ENCODE measurements at regions of chr10 and their contacts with region 1.

Region 1: DNA sequence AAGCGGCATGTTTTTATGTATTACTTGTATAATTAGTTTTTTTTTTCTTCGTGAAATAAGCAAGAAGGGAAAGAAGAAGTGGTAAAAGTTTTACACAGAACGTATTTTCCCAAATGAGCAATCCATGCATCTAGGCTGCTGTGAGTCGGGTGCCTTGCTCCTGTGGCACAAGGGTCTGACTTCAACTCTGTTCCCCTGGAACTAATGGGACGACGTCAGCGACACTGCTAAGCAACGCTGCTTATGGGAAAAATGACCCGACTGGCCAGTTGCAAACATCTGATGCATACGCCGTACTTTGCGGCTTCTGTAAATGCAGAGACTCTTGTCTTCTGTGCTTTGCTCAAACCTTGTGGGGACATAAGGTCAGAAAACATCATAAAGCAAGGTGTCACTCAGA is 66.3 kb downstream of the MPP7 start:
- DNase-seq: no peak
- H3K4me3 ChIP-seq: no peak overlapping the region
- H3K27ac ChIP-seq: no peak overlapping the region
- H3K4me1 ChIP-seq: peaks cover 0 to under 1% (median 0%) of the 10 kb centered on the region in 4 donors
- H3K27me3 ChIP-seq: no peaks in the 10 kb centered on the region
- CTCF ChIP-seq: no peak
- EP300 ChIP-seq: no peak
- POLR2A ChIP-seq: no peak

Region 2: GRCh38 chr10:28202941-28203352 is 33.6 kb before region 1 on chr10:
- in situ Hi-C with region 1: no loop called
- intact Hi-C with region 1: loop called (anchors 2 kb)
- DNase-seq: no peak
- H3K4me3 ChIP-seq: no peak overlapping the region
- H3K27ac ChIP-seq: no peak overlapping the region
- H3K4me1 ChIP-seq: peaks cover 0 to 10% (median 2%) of the 10 kb centered on the region in 4 donors
- H3K27me3 ChIP-seq: no peaks in the 10 kb centered on the region
- CTCF ChIP-seq: no peak
- EP300 ChIP-seq: no peak
- POLR2A ChIP-seq: no peak

Region 3: DNA sequence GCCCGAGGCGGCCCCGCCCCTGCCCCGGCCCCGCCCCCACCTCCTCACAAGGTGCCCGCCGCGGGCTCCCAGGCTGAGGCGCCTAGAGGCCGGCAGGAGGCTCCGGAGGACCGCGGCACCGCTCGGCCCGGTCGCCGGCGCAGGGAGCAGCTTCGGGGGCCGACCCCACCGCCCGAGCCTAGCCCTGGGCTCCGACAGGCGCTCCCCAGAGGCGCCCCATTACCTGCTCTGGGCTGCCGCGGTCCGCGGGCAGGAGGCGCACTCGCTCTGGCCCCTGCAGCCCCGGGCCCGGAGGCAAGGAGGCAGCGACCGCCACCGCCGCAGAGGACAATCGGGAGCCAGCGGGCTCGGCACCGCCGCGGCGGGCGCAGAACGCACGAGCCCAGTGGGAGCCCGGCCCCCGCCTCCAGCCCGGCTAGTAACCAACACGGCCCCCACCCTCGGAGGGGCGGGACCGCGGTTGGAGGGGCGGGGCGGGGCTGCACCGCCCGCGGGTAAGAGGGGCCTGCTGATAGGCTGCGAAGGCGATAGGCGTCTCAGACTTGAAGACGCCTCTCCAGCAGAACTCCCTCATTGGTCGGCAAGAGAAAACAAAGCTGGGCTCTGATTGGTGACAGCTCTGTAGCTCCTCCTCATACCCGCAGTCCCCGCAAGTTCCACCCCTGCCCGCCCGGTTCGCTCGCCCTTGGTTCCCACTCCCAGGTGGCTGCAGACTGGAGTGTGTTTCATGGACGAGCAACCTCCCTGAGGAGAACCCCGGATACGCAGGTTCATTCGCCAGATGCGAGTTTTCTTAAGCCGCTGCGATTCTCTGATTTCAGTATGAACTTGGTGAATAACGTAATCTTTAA is 66.3 kb after region 1 on chr10 and contains the start of gene MPP7:
- in situ Hi-C with region 1: no loop called
- intact Hi-C with region 1: no loop called
- DNase-seq: peak; percentile 95
- H3K4me3 ChIP-seq: peak within 1 kb of the TSS; percentile 63 to 98 (median 84)
- H3K27ac ChIP-seq: peak within 1 kb of the TSS; percentile 92 to 97 (median 96)
- H3K4me1 ChIP-seq: peaks cover 0 to 23% (median 15%) of the 10 kb centered on the region in 4 donors
- H3K27me3 ChIP-seq: peaks cover 3% of the 10 kb centered on the region
- CTCF ChIP-seq: peak; percentile 42 to 63 (median 55)
- EP300 ChIP-seq: no peak
- POLR2A ChIP-seq: peak; percentile 85
- total RNA-seq, gene MPP7: 13.1 to 44.8 (median 27.3) TPM